B cell (primary cell): ENCODE measurements at regions of chr2 and their contacts with region 1.

Region 1: GRCh38 chr2:231713730-231714430 is 5.6 kb downstream of the PTMA start:
- DNase-seq: peak; percentile 90
- ATAC-seq: peak; percentile 18
- H3K4me3 ChIP-seq: no peak overlapping the region
- H3K4me3 Mint-ChIP-seq: peak overlapping the region; percentile 73
- H3K27ac ChIP-seq: peak overlapping the region; percentile 64 to 75
- H3K27ac Mint-ChIP-seq: peak overlapping the region; percentile 91
- H3K4me1 ChIP-seq: peaks cover 49 to 68% of the 10 kb centered on the region in 2 donors
- H3K4me1 Mint-ChIP-seq: peaks cover 66% of the 10 kb centered on the region
- H3K27me3 ChIP-seq: no peaks in the 10 kb centered on the region
- H3K27me3 Mint-ChIP-seq: no peaks in the 10 kb centered on the region
- CTCF ChIP-seq: peak; percentile 95

Region 2: GRCh38 chr2:231612179-231613053 is 101.5 kb before region 1 on chr2:
- CTCF ChIA-PET with region 1: interaction called, 320 read pairs
- POLR2A ChIA-PET with region 1: interaction called, 108 read pairs
- intact Hi-C with region 1: loop called (anchors 1 kb)
- DNase-seq: peak; percentile 93
- ATAC-seq: peak; percentile 39
- H3K4me3 ChIP-seq: peak overlapping the region in 4 of 5 experiments; percentile 9 to 68 (median 50)
- H3K4me3 Mint-ChIP-seq: peak overlapping the region; percentile 86
- H3K27ac ChIP-seq: peak overlapping the region; percentile 90 to 96
- H3K27ac Mint-ChIP-seq: peak overlapping the region; percentile 96
- H3K4me1 ChIP-seq: peaks cover 21 to 34% of the 10 kb centered on the region in 2 donors
- H3K4me1 Mint-ChIP-seq: peaks cover 42% of the 10 kb centered on the region
- H3K27me3 ChIP-seq: no peaks in the 10 kb centered on the region
- H3K27me3 Mint-ChIP-seq: no peaks in the 10 kb centered on the region
- CTCF ChIP-seq: peak; percentile 87

Region 3: GRCh38 chr2:231662028-231662810 is 51.7 kb before region 1 on chr2:
- CTCF ChIA-PET with region 1: interaction called, 22 read pairs
- POLR2A ChIA-PET with region 1: interaction called, 94 read pairs
- intact Hi-C with region 1: no loop called
- DNase-seq: peak; percentile 100
- ATAC-seq: peak; percentile 76
- H3K4me3 ChIP-seq: peak overlapping the region; percentile 23 to 58 (median 49)
- H3K4me3 Mint-ChIP-seq: peak overlapping the region; percentile 79
- H3K27ac ChIP-seq: peak overlapping the region; percentile 90 to 98
- H3K27ac Mint-ChIP-seq: peak overlapping the region; percentile 96
- H3K4me1 ChIP-seq: peaks cover 44 to 56% of the 10 kb centered on the region in 2 donors
- H3K4me1 Mint-ChIP-seq: peaks cover 58% of the 10 kb centered on the region
- H3K27me3 ChIP-seq: no peaks in the 10 kb centered on the region
- H3K27me3 Mint-ChIP-seq: no peaks in the 10 kb centered on the region
- CTCF ChIP-seq: no peak

Region 4: DNA sequence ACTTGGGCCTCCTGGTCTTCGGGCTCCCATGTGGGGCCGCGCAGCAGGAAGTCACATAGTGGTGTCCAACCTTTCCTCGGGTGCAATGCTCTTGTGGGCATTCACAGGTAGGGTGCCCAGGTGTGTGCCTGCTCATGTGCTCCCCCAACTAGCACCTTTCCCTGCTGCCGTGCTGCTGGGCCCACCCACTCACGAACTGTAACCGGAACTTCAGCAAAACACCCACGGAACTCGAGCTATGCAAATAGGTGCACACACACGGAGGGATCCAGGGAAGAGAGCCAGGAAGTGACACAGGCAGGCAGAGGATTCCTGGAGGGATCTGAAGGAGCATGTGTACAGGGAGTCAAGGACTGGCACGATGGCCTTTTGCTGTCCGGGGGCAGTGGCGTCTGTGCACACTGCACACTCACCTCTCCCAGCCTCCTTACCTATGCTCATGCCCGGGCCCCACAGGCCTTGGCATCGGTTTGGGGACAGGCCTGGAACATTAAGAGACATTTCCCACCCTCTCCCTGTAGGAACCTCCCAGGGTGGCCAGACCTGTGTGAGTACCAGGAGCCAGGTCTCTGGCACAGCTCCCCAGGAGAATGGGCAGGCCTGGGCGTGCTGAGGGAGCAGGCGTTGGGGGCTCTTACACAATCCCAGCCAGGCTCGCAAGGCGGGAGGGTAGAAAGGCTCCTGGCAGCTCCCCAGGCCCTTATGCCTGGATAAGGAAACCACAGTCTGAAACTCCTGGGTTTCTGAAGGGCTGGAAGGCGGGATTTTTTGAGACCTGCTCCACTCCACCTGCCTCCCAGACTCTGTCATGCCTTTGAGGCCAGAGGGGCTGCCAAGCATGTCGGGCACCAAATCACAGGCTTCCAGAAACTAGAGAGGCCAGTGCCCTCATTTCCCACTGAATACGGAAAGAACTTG is 12.2 kb before region 1 on chr2:
- CTCF ChIA-PET with region 1: interaction called, 20 read pairs
- POLR2A ChIA-PET with region 1: interaction called, 7 read pairs
- intact Hi-C with region 1: no loop called
- DNase-seq: no peak
- ATAC-seq: no peak
- H3K4me3 ChIP-seq: no peak overlapping the region
- H3K4me3 Mint-ChIP-seq: no peak overlapping the region
- H3K27ac ChIP-seq: no peak overlapping the region
- H3K27ac Mint-ChIP-seq: no peak overlapping the region
- H3K4me1 ChIP-seq: peaks cover 11 to 14% of the 10 kb centered on the region in 2 donors
- H3K4me1 Mint-ChIP-seq: peaks cover 19% of the 10 kb centered on the region
- H3K27me3 ChIP-seq: no peaks in the 10 kb centered on the region
- H3K27me3 Mint-ChIP-seq: no peaks in the 10 kb centered on the region
- CTCF ChIP-seq: no peak

Region 5: GRCh38 chr2:231780909-231781797 is 67.3 kb after region 1 on chr2 and contains the start of gene PDE6D:
- CTCF ChIA-PET with region 1: interaction called, 12 read pairs
- POLR2A ChIA-PET with region 1: interaction called, 3 read pairs
- intact Hi-C with region 1: loop called (anchors 1 kb)
- DNase-seq: peak; percentile 98
- ATAC-seq: peak; percentile 89
- H3K4me3 ChIP-seq: peak within 1 kb of the TSS; percentile 72 to 92 (median 85)
- H3K4me3 Mint-ChIP-seq: peak within 1 kb of the TSS; percentile 100
- H3K27ac ChIP-seq: peak within 1 kb of the TSS; percentile 63 to 87
- H3K27ac Mint-ChIP-seq: peak within 1 kb of the TSS; percentile 97
- H3K4me1 ChIP-seq: peaks cover 28 to 32% of the 10 kb centered on the region in 2 donors
- H3K4me1 Mint-ChIP-seq: peaks cover 63% of the 10 kb centered on the region
- H3K27me3 ChIP-seq: no peaks in the 10 kb centered on the region
- H3K27me3 Mint-ChIP-seq: no peaks in the 10 kb centered on the region
- CTCF ChIP-seq: no peak
- total RNA-seq, gene PDE6D: 31.9 and 40.8 TPM in 2 replicates

Region 6: GRCh38 chr2:232113821-232114220 is 399.9 kb after region 1 on chr2:
- CTCF ChIA-PET with region 1: no interaction called
- POLR2A ChIA-PET with region 1: no interaction called
- intact Hi-C with region 1: no loop called
- DNase-seq: no peak
- ATAC-seq: no peak
- H3K4me3 ChIP-seq: no peak overlapping the region
- H3K4me3 Mint-ChIP-seq: no peak overlapping the region
- H3K27ac ChIP-seq: no peak overlapping the region
- H3K27ac Mint-ChIP-seq: no peak overlapping the region
- H3K4me1 ChIP-seq: no peaks in the 10 kb centered on the region
- H3K4me1 Mint-ChIP-seq: no peaks in the 10 kb centered on the region
- H3K27me3 ChIP-seq: no peaks in the 10 kb centered on the region
- H3K27me3 Mint-ChIP-seq: no peaks in the 10 kb centered on the region
- CTCF ChIP-seq: no peak